Mucosa of descending colon (tissue), 3 donors: ENCODE measurements at regions of chr5 and their contacts with region 1.

Region 1: GRCh38 chr5:40736103-40736875 is 19.5 kb downstream of the TTC33 start:
- DNase-seq: no peak
- ATAC-seq: peak; percentile 51
- H3K4me3 ChIP-seq: no peak overlapping the region
- H3K4me1 ChIP-seq: peaks cover 32% of the 10 kb centered on the region
- CTCF ChIP-seq: peak; percentile 50

Region 2: DNA sequence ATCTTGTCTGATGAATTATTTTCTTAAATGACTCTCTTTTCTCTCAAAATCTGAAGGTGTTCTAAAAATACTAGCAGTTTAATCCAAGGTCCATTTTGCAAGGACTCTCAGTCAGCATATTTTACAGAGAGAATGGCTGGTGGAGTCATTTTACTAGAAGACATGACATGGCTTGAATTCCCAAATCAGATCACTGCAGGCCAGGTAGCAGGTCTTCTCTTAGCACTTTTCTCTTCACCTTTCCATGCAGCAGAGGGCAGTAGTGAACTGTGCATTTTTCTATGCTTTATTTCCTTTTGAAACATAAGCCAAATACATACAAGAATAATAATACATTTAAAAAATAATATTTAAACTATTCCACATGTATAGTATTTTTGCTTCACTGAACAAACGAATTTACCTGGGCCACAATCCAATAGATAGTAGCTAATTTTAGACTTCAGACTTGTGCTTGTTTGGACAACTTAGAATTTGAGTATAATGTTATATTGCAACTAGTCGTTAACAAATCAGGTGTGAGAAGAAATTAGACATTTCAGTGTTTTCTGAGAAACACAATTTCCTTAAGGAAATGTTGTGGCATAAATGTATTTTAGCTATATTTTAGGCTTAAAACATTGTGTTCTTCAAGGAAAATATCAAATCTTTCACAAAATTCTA is 1022.1 kb before region 1 on chr5:
- intact Hi-C with region 1: loop called in 1 of 2 experiments (anchors 10 kb)
- DNase-seq: peak in 1 of 3 donors; percentile 84
- ATAC-seq: peak; percentile 83
- H3K4me3 ChIP-seq: no peak overlapping the region
- H3K4me1 ChIP-seq: peaks cover 6% of the 10 kb centered on the region
- CTCF ChIP-seq: peak; percentile 41

Region 3: GRCh38 chr5:39948867-39949468 is 787.3 kb before region 1 on chr5:
- intact Hi-C with region 1: loop called in 1 of 2 experiments (anchors 10 kb)
- DNase-seq: peak in 1 of 3 donors; percentile 90
- ATAC-seq: peak; percentile 84
- H3K4me3 ChIP-seq: no peak overlapping the region
- H3K4me1 ChIP-seq: no peaks in the 10 kb centered on the region
- CTCF ChIP-seq: no peak

Region 4: DNA sequence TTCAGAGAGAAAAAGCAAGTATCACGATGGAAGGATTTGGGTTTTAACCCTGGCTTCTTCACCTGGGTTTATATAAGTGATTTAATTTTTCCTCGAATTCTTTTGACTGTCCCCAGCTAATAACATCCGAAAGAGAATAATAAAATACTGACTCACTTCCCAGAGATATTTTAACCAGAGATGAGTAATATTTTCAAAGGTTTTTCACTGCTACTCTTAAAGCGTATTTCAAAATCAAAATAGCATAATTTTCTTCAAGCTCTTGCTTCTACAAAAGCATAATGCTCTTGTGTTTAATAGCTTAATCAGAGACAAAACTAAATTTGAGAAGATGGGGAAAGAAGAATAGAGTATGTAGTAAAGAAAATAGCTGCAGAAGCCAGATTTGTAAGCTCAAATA is 271.8 kb before region 1 on chr5:
- intact Hi-C with region 1: no loop called
- DNase-seq: no peak
- ATAC-seq: no peak
- H3K4me3 ChIP-seq: no peak overlapping the region
- H3K4me1 ChIP-seq: no peaks in the 10 kb centered on the region
- CTCF ChIP-seq: no peak

Region 5: DNA sequence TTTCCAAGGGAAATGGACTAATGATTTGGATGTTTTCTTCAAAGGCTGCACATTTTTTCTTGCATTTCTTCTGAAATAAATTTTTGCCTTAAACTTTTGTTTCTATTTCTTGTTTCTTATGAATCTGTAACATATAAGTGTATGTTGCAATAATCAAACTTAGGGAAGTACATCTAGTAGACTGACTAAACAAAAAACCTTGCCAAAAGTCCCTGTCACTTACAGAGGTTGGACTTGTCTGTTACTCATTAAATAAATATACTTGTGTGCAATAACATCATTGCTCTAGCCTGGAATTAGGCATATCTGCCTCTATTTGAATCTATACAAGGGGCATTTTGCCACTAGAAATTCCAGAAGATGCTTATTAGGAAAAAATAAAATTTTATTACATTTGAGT is 420.4 kb after region 1 on chr5:
- intact Hi-C with region 1: no loop called
- DNase-seq: no peak
- ATAC-seq: peak; percentile 84
- H3K4me3 ChIP-seq: no peak overlapping the region
- H3K4me1 ChIP-seq: no peaks in the 10 kb centered on the region
- CTCF ChIP-seq: no peak